ENCODE measurements at regions of chr19 and their contacts with region 1.

Region 1: GRCh38 chr19:57362997-57363705 is at the starts of genes TRAPPC2B and ZNF547:
- DNase-seq: peak; percentile 96 to 100
- ATAC-seq: peak; percentile 97 to 99
- H3K4me3 ChIP-seq: peak within 1 kb of the TSS; percentile 66
- H3K27ac ChIP-seq: peak within 1 kb of the TSS; percentile 64 to 89
- H3K4me1 ChIP-seq: no peaks in the 10 kb centered on the region
- CTCF ChIP-seq: no peak
- EP300 ChIP-seq: no peak
- POLR2A ChIP-seq: no peak
- RAD21 ChIP-seq: no peak
- polyA plus RNA-seq, gene TRAPPC2B: 25.1 and 27.8 TPM in 2 replicates
- polyA plus RNA-seq, gene ZNF547: 2.9 TPM in 2 replicates

Region 2: GRCh38 chr19:57350877-57351805 is 12.0 kb before region 1 on chr19 and contains the start of gene ZNF304:
- CTCF ChIA-PET with region 1: no interaction called
- POLR2A ChIA-PET with region 1: interaction called, 12 read pairs
- DNase-seq: peak; percentile 85 to 94
- ATAC-seq: peak; percentile 92 to 100
- H3K4me3 ChIP-seq: peak within 1 kb of the TSS; percentile 63
- H3K27ac ChIP-seq: peak within 1 kb of the TSS; percentile 43 to 76; a peak in 4 of 6 replicates
- H3K4me1 ChIP-seq: no peaks in the 10 kb centered on the region
- CTCF ChIP-seq: no peak
- EP300 ChIP-seq: no peak
- POLR2A ChIP-seq: no peak
- RAD21 ChIP-seq: no peak
- polyA plus RNA-seq, gene ZNF304: 4.8 and 5.5 TPM in 2 replicates